PC-9 (cell line): ENCODE measurements at regions of chr3 and their contacts with region 1.

Region 1: DNA sequence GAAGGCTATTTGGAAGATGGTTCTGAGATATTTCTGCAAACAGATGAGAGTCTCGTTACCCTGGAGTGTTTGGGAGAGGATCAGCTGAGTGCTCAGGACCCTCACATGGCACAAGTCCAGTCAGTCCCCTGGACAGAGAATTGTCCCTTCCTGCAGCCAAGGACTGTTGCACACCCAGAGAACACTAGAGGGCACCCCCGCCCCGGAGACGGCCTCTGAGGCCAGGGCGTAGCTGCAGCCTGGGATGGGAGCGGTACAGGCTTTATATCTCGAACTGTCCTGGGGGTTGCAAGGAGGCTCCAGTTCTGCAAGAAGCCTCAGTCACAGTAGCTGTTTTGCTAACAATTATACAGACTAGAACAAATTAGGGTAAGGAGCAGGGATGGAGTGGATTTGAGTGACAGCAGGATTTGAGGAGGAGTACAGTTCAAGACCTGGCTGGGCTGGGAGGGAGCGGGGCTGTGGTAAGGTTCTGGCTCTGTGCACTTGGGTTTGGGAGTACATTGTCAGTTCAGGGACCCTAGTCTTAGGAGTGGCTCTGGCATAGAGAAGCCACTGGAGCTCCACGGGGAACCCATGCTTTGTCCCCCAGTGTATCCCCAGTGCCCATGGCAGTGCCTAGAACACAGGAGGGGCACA is 67.6 kb upstream of the HACD2 start:
- DNase-seq: peak; percentile 51 to 81
- H3K4me3 ChIP-seq: no peak overlapping the region
- H3K27ac ChIP-seq: no peak overlapping the region
- H3K4me1 ChIP-seq: no peaks in the 10 kb centered on the region; the same call in 1 of the 2 replicates
- H3K27me3 ChIP-seq: no peaks in the 10 kb centered on the region
- CTCF ChIP-seq: peak; percentile 92

Region 2: GRCh38 chr3:123706871-123707270 is 54.4 kb after region 1 on chr3:
- CTCF ChIA-PET with region 1: interaction called, 14 read pairs
- POLR2A ChIA-PET with region 1: no interaction called
- intact Hi-C with region 1: loop called (anchors 1 kb)
- DNase-seq: no peak
- H3K4me3 ChIP-seq: no peak overlapping the region
- H3K27ac ChIP-seq: no peak overlapping the region
- H3K4me1 ChIP-seq: no peaks in the 10 kb centered on the region
- H3K27me3 ChIP-seq: peaks cover 14% of the 10 kb centered on the region; the same call in 1 of the 2 replicates
- CTCF ChIP-seq: no peak

Region 3: GRCh38 chr3:123884203-123884831 is 231.9 kb after region 1 on chr3 and contains the start of gene MYLK:
- CTCF ChIA-PET with region 1: interaction called, 3 read pairs
- POLR2A ChIA-PET with region 1: no interaction called
- intact Hi-C with region 1: loop called (anchors 1 kb)
- DNase-seq: peak in 1 of 2 experiments; percentile 23
- H3K4me3 ChIP-seq: no peak within 1 kb of the TSS
- H3K27ac ChIP-seq: no peak within 1 kb of the TSS
- H3K4me1 ChIP-seq: no peaks in the 10 kb centered on the region
- H3K27me3 ChIP-seq: no peaks in the 10 kb centered on the region
- CTCF ChIP-seq: no peak
- total RNA-seq, gene MYLK: 0.72 and 1.2 TPM in 2 replicates

Region 4: GRCh38 chr3:124078953-124079911 is 426.8 kb after region 1 on chr3:
- CTCF ChIA-PET with region 1: interaction called, 3 read pairs
- POLR2A ChIA-PET with region 1: no interaction called
- intact Hi-C with region 1: loop called (anchors 1 kb)
- DNase-seq: peak in 1 of 2 experiments; percentile 9
- H3K4me3 ChIP-seq: no peak overlapping the region
- H3K27ac ChIP-seq: no peak overlapping the region
- H3K4me1 ChIP-seq: no peaks in the 10 kb centered on the region
- H3K27me3 ChIP-seq: peaks cover 69% of the 10 kb centered on the region
- CTCF ChIP-seq: peak; percentile 84

Region 5: DNA sequence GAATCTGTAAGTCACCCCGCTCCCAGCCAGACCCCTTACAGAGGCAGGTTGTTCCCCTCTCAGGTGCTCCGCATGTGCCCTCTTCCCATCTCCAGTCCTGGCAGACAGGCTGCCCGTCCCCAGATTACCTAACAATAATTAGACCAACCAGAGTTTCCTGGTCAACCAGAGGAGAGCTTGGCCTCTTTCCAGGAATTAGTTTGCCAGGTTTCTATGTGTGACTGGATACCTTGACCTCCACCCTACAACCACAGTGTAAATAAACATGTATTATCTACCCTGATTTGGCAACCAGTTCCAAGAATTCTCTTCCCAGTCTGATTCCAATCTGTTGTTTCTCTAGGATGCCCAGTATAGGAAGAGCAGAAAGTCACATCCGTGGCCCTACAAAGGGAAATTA is 899.8 kb after region 1 on chr3:
- CTCF ChIA-PET with region 1: no interaction called
- POLR2A ChIA-PET with region 1: no interaction called
- intact Hi-C with region 1: loop called (anchors 2 kb)
- DNase-seq: peak; percentile 78 to 85
- H3K4me3 ChIP-seq: no peak overlapping the region
- H3K27ac ChIP-seq: no peak overlapping the region
- H3K4me1 ChIP-seq: peaks cover 14% of the 10 kb centered on the region; the same call in 1 of the 2 replicates
- H3K27me3 ChIP-seq: peaks cover 41% of the 10 kb centered on the region
- CTCF ChIP-seq: no peak